ENCODE measurements at regions of chr12 and their contacts with region 1.

Region 1: DNA sequence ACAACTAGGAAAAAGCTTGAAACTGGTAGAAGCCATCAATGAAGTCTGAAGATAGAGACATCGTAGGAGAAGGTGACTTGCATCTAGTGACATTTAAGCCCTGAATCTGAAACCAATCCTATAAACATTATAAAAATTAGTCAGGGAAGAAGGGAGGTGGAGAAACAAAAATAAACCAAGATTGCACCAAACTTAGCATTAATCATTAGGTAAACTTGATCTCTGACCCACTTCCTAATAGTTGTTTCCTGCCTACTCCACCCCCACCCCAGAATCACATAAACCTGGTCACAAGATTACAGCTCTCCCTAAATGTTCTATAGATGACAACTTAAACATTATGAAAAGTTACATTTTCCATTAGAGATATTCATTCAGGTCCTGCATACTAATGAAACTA is 40.4 kb downstream of the TSPAN19 start:
- DNase-seq: peak; percentile 30
- H3K4me3 Mint-ChIP-seq: no peak overlapping the region
- H3K27ac Mint-ChIP-seq: peak overlapping the region; percentile 1
- H3K4me1 Mint-ChIP-seq: peaks cover 18% of the 10 kb centered on the region
- H3K27me3 Mint-ChIP-seq: no peaks in the 10 kb centered on the region
- CTCF ChIP-seq: no peak

Region 2: GRCh38 chr12:85029456-85029855 is 33.8 kb after region 1 on chr12:
- CTCF ChIA-PET with region 1: interaction called, 12 read pairs
- POLR2A ChIA-PET with region 1: no interaction called
- intact Hi-C with region 1: no loop called
- DNase-seq: peak; percentile 44
- H3K4me3 Mint-ChIP-seq: no peak overlapping the region
- H3K27ac Mint-ChIP-seq: no peak overlapping the region
- H3K4me1 Mint-ChIP-seq: no peaks in the 10 kb centered on the region
- H3K27me3 Mint-ChIP-seq: no peaks in the 10 kb centered on the region
- CTCF ChIP-seq: peak; percentile 43

Region 3: GRCh38 chr12:85531341-85531740 is 535.7 kb after region 1 on chr12:
- CTCF ChIA-PET with region 1: no interaction called
- POLR2A ChIA-PET with region 1: no interaction called
- intact Hi-C with region 1: no loop called
- DNase-seq: no peak
- H3K4me3 Mint-ChIP-seq: no peak overlapping the region
- H3K27ac Mint-ChIP-seq: no peak overlapping the region
- H3K4me1 Mint-ChIP-seq: no peaks in the 10 kb centered on the region
- H3K27me3 Mint-ChIP-seq: no peaks in the 10 kb centered on the region
- CTCF ChIP-seq: no peak

Measured in MCF 10A (cell line).